GM12878 (cell line): ENCODE measurements at regions of chr11 and their contacts with region 1.

Region 1: DNA sequence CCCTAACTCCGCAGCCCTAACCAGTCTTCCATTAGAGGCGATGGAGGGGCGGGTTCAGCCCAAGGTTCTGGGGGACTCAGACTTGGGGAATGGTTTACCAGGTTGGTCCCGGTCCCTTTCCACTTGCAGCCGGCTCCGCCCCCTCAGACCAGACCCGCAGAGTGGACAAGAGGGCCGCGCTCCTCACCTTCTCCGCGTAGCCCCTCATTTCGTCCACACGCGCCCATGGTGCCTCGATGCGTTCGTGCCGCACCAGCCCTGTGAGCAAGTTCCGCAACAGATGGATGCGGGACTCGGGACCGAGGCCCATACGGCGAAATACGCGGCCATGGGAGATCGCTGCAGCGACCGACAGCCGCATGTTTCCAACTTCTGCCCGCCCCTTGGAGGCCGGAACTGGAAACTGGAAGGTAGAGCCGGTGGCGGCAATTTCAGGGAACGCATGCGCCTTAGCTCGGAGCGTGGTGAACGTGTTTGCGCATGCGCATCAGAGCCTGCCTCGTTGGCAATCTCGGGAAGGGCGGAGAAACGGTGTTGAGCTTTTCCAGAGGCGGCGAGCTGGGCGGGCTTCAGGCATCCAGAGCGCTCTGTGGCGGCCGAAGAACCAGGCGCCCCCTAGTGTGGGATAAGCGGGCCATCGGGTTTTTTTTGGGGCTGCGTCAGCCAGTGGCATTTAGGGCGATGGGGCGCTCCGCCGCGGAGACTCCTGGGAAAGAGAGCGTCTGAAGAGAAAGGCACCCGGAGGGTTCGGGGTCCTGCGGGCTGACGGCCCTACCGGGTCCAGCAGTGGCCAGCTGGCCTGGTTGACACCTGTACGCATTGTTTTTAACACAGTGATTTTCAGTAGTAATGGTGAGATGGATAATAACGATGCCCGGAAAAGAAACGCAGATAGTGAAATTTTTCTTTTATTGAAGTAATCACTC is at the start of gene MRPL17:
- DNase-seq: peak; percentile 99
- ATAC-seq: peak; percentile 94
- H3K4me3 ChIP-seq: peak within 1 kb of the TSS; percentile 97
- H3K27ac ChIP-seq: peak within 1 kb of the TSS; percentile 83
- H3K4me1 ChIP-seq: 0 out of 2 replicates have a peak, but pooled peaks cover 2% of the 10 kb centered on the region
- H3K27me3 ChIP-seq: no peaks in the 10 kb centered on the region
- CTCF ChIP-seq: peak; percentile 82 to 96 (median 84); a peak in 5 of 6 replicates
- EP300 ChIP-seq: no peak
- POLR2A ChIP-seq: peak; percentile 98
- RAD21 ChIP-seq: peak; percentile 66
- polyA plus RNA-seq, gene MRPL17: 170 to 171 TPM

Region 2: DNA sequence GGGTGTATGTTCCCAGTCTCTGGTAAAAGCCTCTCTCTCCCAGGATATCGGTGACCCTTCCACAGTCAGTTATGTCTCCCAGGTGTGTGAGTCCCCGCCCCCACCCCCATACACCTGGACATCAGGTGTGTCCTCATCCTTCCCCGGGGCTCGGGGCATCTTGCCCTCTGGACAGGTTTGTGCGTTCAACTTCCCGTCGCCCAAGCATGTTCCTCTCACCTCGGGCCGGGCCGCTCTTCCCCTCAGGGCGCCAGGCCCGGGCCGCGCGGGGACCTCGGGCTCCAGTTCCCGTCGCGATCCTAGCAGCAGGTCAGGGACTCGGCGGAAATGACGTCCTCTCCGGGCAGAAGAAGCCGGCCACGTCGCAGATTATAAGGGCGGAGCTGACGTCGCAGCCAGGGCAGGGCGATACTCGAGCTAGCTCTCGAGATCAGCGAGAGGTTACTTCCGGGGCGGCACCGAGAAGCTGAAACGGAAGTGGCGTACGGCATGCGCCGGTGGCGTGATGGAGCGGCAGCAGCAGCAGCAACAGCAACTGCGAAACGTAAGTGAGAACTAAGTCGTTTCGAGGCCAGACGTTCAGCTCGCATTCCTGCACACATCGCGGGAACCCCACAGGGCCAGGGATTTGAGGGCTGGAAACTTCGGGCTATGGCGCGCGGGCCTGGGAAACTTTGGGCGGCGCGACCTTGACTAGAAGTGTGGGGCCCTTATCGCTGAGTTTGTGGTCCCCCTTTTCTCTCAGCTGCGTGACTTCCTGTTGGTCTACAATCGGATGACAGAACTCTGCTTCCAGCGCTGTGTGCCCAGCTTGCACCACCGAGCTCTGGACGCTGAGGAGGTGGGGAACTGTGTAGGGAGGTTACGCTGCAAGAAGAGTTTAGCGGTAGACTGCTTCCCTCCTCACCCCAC is 201.9 kb before region 1 on chr11 and contains the starts of genes ARFIP2 and TIMM10B:
- CTCF ChIA-PET with region 1: interaction called, 12 read pairs
- POLR2A ChIA-PET with region 1: interaction called, 4 read pairs
- RAD21 ChIA-PET with region 1: interaction called, 10 read pairs
- SMC1A ChIA-PET with region 1: interaction called, 10 read pairs
- in situ Hi-C with region 1: no loop called
- intact Hi-C with region 1: no loop called
- DNase-seq: peak; percentile 91
- ATAC-seq: peak; percentile 98
- H3K4me3 ChIP-seq: peak within 1 kb of the TSS; percentile 98
- H3K27ac ChIP-seq: peak within 1 kb of the TSS; percentile 80
- H3K4me1 ChIP-seq: peaks cover 19% of the 10 kb centered on the region
- H3K27me3 ChIP-seq: no peaks in the 10 kb centered on the region
- CTCF ChIP-seq: no peak
- EP300 ChIP-seq: no peak
- POLR2A ChIP-seq: peak; percentile 98
- RAD21 ChIP-seq: no peak
- polyA plus RNA-seq, gene ARFIP2: 11.7 to 18.9 TPM
- polyA plus RNA-seq, gene TIMM10B: 93.3 to 126 TPM

Region 3: DNA sequence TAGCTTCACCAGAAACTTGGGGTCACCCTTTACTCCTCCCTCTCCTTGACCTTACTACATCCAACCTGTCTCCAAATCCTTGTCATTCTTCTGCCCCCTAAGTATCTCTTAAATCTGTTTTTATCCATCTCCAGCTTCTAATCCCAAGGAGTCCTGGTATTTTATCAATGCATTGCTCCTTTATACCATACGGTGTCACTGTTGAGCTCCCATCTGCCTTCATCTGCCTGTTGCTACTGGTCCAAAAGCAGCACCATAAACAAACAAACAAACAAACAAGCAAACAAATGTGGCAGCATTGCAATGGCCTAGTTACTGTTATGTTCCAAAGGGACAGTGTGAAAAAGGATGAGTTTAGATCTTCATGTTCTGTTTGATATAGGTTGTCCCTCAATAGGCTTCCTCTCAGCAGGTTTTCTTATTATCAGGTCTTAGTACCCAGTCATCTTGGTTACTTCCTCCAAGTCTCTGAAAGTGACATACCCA is 151.9 kb before region 1 on chr11:
- CTCF ChIA-PET with region 1: interaction called, 126 read pairs
- POLR2A ChIA-PET with region 1: interaction called, 3 read pairs
- RAD21 ChIA-PET with region 1: interaction called, 74 read pairs
- SMC1A ChIA-PET with region 1: interaction called, 29 read pairs
- in situ Hi-C with region 1: loop called (anchors 5 kb)
- intact Hi-C with region 1: loop called (anchors 1 kb)
- DNase-seq: peak; percentile 27
- ATAC-seq: peak; percentile 80
- H3K4me3 ChIP-seq: no peak overlapping the region
- H3K27ac ChIP-seq: no peak overlapping the region
- H3K4me1 ChIP-seq: peaks cover 8% of the 10 kb centered on the region; the same call in 1 of the 2 replicates
- H3K27me3 ChIP-seq: no peaks in the 10 kb centered on the region
- CTCF ChIP-seq: peak; percentile 66 to 73 (median 70)
- EP300 ChIP-seq: no peak
- POLR2A ChIP-seq: no peak
- RAD21 ChIP-seq: peak; percentile 89

Region 4: GRCh38 chr11:6612213-6613041 is 70.8 kb before region 1 on chr11 and contains the start of gene TAF10:
- CTCF ChIA-PET with region 1: interaction called, 26 read pairs
- POLR2A ChIA-PET with region 1: interaction called, 34 read pairs
- RAD21 ChIA-PET with region 1: interaction called, 23 read pairs
- SMC1A ChIA-PET with region 1: interaction called, 57 read pairs
- in situ Hi-C with region 1: no loop called
- intact Hi-C with region 1: loop called (anchors 2 kb)
- DNase-seq: peak; percentile 77
- ATAC-seq: peak; percentile 92
- H3K4me3 ChIP-seq: peak within 1 kb of the TSS; percentile 87
- H3K27ac ChIP-seq: peak within 1 kb of the TSS; percentile 99
- H3K4me1 ChIP-seq: peaks cover 25% of the 10 kb centered on the region
- H3K27me3 ChIP-seq: no peaks in the 10 kb centered on the region
- CTCF ChIP-seq: peak; percentile 30 to 62 (median 42); a peak in 5 of 6 replicates
- EP300 ChIP-seq: no peak
- POLR2A ChIP-seq: peak; percentile 96
- RAD21 ChIP-seq: no peak
- polyA plus RNA-seq, gene TAF10: 27.2 to 78.9 TPM

Region 5: DNA sequence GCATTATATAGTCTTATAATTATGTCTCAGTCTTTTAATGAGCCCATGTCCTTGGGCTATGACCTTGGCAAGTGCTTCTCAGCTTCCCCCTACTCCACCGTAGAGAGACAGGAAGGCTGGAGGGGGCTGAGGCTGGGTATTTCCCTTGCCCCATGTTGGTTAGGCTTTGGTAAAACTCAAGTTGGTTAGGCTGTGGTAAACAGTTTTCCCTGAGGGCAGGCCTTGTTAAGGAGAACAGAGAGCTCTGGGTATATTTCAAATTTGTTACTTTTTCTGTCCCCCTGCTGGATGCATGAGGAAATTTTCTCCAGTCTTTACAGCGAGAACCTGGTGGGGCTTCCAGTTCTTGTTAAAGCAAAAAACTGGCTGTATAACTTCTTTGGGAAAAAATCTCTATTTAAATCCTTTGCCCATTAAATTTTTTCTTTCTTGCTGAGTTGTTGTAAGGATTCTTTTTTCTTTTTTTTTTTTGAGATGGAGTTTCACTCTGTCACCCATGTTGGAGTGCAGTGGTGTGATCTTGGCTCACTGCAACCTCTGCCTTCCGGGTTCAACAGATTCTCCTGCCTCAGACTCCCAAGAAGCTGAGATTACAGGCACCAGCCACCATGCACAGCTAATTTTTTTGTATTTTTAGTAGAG is 15.3 kb before region 1 on chr11:
- CTCF ChIA-PET with region 1: interaction called, 25 read pairs
- POLR2A ChIA-PET with region 1: interaction called, 4 read pairs
- RAD21 ChIA-PET with region 1: interaction called, 10 read pairs
- SMC1A ChIA-PET with region 1: interaction called, 32 read pairs
- in situ Hi-C with region 1: no loop called
- intact Hi-C with region 1: no loop called
- DNase-seq: peak; percentile 48
- ATAC-seq: peak; percentile 93
- H3K4me3 ChIP-seq: no peak overlapping the region
- H3K27ac ChIP-seq: no peak overlapping the region
- H3K4me1 ChIP-seq: no peaks in the 10 kb centered on the region
- H3K27me3 ChIP-seq: no peaks in the 10 kb centered on the region
- CTCF ChIP-seq: peak; percentile 40 to 54 (median 52); a peak in 5 of 6 replicates
- EP300 ChIP-seq: no peak
- POLR2A ChIP-seq: no peak
- RAD21 ChIP-seq: peak; percentile 41

Region 6: GRCh38 chr11:6705905-6706535 is 22.8 kb after region 1 on chr11:
- CTCF ChIA-PET with region 1: interaction called, 14 read pairs
- POLR2A ChIA-PET with region 1: no interaction called
- RAD21 ChIA-PET with region 1: interaction called, 8 read pairs
- SMC1A ChIA-PET with region 1: interaction called, 7 read pairs
- in situ Hi-C with region 1: no loop called
- intact Hi-C with region 1: no loop called
- DNase-seq: no peak
- ATAC-seq: peak; percentile 83
- H3K4me3 ChIP-seq: no peak overlapping the region
- H3K27ac ChIP-seq: no peak overlapping the region
- H3K4me1 ChIP-seq: no peaks in the 10 kb centered on the region
- H3K27me3 ChIP-seq: no peaks in the 10 kb centered on the region
- CTCF ChIP-seq: peak; percentile 77 to 92 (median 84)
- EP300 ChIP-seq: no peak
- POLR2A ChIP-seq: no peak
- RAD21 ChIP-seq: peak; percentile 71